Tibial artery (tissue), 4 donors: ENCODE measurements at regions of chr7 and their contacts with region 1.

Region 1: DNA sequence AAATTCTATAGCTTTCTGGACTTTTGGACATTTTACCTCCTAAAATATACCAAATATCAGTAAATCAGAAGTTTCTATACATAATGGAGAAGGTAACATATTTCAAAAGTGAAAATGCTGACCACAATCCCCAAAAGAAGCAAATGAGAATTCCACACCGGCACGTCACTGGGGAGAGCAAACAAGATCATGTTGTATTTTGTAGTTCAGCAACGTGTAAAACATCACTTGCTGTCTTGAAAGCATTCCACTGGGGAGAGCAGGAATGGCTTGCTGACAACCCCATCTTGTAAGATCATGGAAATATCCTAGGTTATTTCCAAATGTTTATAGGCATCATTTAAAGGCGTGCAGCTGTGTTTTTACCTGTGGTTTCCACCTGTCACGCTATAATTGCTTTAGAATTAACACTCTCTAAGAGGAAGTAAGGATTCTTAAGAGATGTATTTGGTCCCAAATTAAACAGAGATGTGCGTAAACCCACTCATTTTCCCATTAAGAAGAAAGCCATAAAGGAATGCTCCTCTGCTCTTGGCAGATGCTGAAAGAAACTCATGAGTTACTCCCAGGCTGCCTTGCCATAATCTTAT is 397.1 kb upstream of the POT1 start:
- DNase-seq: no peak
- H3K4me3 ChIP-seq: no peak overlapping the region
- H3K27ac ChIP-seq: no peak overlapping the region
- H3K4me1 ChIP-seq: no peaks in the 10 kb centered on the region
- H3K27me3 ChIP-seq: no peaks in the 10 kb centered on the region
- CTCF ChIP-seq: no peak

Region 2: DNA sequence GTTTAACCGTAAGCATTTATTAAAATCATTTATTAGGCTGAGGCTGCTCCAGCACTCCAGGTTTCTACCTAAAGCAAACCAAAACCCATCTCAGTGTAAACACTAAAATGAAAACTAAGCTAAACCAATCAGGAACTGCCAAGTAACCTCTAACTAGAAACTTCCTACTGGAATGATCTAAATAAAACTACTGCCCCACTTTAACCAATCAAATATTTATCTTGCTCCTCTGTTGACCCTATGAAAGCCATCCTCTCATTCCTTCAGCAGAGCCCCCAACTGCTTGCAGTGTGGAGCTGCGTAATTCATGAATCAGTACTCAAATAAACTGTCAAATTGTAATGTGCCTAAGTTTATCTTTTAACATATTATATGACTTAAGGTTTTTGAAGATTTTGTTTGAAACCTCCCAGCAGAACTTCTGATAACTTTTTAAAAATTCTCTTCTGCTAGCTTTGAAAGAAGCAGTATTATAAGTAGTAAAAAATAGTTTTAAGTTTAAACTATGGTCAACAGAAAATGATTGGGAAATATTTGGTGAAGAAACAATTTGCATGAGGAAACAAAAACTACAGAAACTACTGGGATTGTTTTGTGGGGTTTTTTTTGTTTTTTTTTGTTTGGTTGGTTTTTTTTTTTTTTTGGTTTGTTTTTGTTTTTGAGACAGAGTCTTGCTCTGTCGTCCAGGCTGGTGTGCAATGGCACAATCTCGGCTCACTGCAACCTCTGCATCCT is 608.6 kb before region 1 on chr7:
- intact Hi-C with region 1: loop called (anchors 5 kb)
- DNase-seq: no peak
- H3K4me3 ChIP-seq: no peak overlapping the region
- H3K27ac ChIP-seq: no peak overlapping the region
- H3K4me1 ChIP-seq: peaks cover 0 to 8% (median 2%) of the 10 kb centered on the region in 4 donors
- H3K27me3 ChIP-seq: no peaks in the 10 kb centered on the region
- CTCF ChIP-seq: no peak